ENCODE measurements at regions of chr2 and their contacts with region 1.

Region 1: GRCh38 chr2:71614976-71615766 is 161.8 kb downstream of the DYSF start:
- DNase-seq: peak; percentile 92

Region 2: GRCh38 chr2:71545572-71546274 is 69.4 kb before region 1 on chr2:
- intact Hi-C with region 1: no loop called
- DNase-seq: peak; percentile 74

Region 3: DNA sequence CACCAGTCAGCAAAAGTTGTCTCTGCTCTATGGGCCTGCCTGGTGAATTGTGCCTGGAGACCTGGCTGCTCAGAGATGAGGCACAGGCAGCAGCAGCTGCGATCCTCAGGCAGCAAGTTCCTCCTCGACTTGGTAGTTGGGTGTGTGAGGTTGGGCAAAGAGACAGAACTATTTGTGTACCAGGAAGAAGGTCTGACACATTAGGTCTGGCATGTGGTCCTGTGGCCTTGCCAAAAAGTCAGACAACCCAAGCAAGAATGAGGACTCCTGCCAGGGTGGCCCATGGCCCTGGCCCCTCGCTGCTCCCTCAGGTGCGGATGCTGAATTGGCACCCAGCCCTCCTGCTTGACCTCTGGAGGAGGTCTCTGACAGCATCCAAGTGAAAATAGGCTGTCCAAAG is 30.9 kb after region 1 on chr2:
- intact Hi-C with region 1: loop called (anchors 1 kb)
- DNase-seq: peak; percentile 86

Region 4: DNA sequence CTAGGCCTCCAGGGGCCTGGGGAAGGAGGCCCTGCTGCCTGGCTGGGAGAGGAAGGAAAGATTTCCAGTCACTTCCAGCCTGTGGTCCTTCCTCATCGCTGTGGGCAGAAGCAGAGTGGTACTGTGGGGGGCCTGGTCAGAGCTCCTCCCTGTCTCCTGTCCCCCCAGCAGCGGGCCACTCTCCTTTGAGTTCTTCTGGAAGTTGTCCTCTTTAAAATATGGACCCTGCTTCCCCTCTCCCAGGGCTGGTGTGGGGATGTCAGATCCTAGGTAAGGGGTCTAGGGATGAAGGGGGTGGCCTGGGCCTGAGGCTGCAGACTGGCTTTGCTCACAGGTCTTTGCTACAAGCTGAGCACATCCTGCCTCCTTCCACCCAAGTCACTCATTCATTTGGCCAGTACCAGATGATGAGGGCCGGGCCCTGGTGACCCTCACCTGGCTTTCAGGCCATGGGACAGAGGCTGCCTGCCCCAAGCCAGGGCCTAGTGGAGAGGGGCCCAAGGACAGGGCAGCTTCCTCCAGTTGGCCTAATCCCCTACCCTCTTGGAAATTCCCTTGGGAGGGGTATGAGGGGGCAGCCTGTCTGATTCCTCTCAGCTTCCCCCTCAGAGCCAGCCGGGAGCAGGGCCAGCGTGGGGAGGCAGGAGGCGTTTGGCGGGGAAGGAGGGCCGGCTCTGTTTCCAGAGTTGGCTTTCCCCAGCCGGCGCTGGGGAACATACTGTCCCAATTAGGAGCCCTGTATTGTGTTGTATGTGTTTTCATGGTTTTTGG is 70.1 kb after region 1 on chr2:
- intact Hi-C with region 1: loop called (anchors 5 kb)
- DNase-seq: no peak

Region 5: DNA sequence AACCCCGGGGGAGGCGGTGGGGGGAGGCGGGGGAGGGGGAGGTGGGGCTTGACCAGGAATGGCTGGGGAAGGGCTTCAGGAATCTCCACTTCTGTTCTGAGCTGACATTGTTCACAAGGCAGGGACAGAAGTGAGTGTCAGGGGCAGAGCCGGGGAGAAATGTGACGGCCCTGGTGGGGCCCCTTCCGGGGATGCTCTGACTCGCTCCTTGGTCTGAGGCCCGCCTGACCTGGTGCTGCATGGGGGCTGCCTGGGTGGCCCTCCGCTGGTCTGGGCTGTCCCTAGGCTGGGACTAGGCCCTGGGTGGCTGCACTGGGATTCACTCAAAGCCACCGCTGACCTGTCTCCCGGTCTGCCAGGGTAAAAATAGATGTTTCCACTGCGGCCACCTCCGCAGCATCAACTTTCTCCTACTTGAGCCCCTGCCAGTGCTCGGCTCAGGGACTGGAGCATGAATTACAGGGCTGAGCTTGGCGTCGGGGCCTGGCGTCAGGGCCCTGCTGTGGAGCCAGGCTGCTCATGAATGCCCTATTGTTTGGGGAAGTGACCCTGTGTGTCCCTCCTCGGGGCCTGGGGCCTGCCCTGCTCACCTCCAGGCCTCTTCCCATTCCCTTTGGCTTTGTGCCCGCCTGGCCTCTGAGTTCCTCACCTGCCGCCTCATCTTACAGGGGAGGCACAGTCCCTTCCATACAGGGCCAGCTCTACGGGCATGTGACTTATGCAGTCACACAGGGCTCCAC is 85.7 kb after region 1 on chr2:
- intact Hi-C with region 1: loop called (anchors 2 kb)
- DNase-seq: peak; percentile 90

Region 6: DNA sequence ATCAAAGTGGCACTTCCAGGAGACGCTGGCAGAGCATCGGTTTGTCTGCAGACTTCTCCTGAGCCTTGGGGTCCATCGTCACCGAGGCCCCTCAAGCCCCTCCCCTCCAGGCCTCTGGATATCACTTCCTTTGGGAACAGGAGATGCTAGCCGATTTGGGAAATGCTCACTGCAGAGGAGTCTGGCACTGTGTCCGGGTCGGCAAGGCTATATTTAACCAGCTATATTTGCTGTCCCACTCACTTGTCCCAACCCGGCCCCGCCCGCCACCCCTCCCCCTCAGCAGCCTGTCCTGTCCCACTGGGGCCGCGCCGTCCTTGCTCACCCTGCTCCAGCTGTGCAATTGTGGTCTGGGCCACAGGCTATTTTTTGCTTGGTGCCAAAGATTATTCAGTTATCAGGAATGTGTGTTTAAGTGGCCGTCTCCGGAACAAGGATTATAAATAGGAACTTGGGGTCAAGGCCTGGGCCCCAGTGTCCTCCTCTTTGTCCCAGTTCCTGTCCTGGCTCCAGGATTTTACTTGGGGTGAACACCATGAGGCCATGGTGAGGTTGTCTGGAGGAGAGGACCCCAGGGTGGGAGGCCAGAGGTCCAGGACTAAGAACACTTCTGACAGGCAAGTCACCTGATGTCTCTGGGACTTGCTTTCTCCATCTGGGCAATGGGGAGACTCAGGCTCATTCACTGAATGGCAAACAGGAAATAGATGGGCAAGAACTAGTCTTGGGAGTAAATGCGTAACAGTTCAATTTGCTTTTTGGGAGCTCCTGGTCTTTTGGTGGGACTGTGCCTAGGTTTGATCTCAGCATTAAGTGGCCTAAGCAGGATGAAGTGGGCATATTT is 101.8 kb after region 1 on chr2:
- intact Hi-C with region 1: loop called (anchors 1 kb)
- DNase-seq: peak; percentile 95

Region 7: GRCh38 chr2:71882949-71883472 is 267.8 kb after region 1 on chr2:
- intact Hi-C with region 1: loop called (anchors 5 kb)
- DNase-seq: peak; percentile 91

Measured in cardiac septum (tissue), 1 donor.